ENCODE measurements at regions of chr12 and their contacts with region 1.

Region 1: DNA sequence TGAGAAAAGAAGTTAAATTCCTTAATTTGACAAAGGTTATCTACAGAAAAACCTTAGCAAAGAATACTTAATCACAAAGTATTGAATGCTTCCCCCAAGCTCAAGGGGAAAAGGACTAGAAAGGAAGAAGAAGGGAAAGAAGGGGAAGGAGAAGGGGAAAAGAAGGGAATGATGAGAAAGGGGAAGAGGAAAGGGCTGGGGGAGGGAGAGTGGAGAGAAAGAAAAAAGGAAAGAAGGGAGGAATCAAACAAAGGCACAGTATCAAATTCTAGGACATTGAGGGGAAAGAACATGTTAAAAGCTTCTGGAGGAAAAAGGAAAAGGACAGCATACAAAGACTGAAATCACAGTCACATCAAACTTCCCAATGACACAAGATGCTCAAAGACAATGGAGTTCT is 70.3 kb downstream of the BCL2L14 start:
- DNase-seq: no peak
- ATAC-seq: no peak
- H3K4me3 ChIP-seq: no peak overlapping the region
- H3K27ac ChIP-seq: no peak overlapping the region
- H3K4me1 ChIP-seq: no peaks in the 10 kb centered on the region
- H3K27me3 ChIP-seq: no peaks in the 10 kb centered on the region
- CTCF ChIP-seq: no peak
- POLR2A ChIP-seq: no peak
- RAD21 ChIP-seq: no peak

Region 2: DNA sequence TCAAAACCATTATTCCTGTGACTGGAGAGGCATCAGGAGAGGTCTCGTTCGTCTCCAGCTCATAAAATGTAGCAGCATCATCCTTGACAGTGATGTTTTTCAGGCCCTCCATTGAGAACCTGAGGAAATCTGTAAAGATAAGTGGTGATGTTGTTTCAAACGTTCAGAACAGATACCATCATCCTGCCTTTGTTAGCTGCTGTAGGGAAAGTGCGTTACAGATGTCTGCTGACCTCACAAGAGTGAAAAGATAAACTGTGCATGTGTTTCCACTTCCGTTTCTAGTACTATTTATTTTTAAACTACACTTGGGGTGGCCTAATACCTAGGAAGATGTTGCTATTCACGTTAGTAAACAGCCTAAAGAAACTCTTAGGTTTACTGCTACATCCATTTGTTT is 41.9 kb before region 1 on chr12:
- CTCF ChIA-PET with region 1: no interaction called
- POLR2A ChIA-PET with region 1: no interaction called
- dilution Hi-C with region 1: no loop called
- in situ Hi-C with region 1: no loop called
- intact Hi-C with region 1: no loop called
- DNase-seq: no peak
- ATAC-seq: no peak
- H3K4me3 ChIP-seq: no peak overlapping the region
- H3K27ac ChIP-seq: no peak overlapping the region
- H3K4me1 ChIP-seq: peaks cover 8% of the 10 kb centered on the region; the same call in 1 of the 2 replicates
- H3K27me3 ChIP-seq: no peaks in the 10 kb centered on the region
- CTCF ChIP-seq: no peak
- POLR2A ChIP-seq: no peak
- RAD21 ChIP-seq: no peak

Region 3: DNA sequence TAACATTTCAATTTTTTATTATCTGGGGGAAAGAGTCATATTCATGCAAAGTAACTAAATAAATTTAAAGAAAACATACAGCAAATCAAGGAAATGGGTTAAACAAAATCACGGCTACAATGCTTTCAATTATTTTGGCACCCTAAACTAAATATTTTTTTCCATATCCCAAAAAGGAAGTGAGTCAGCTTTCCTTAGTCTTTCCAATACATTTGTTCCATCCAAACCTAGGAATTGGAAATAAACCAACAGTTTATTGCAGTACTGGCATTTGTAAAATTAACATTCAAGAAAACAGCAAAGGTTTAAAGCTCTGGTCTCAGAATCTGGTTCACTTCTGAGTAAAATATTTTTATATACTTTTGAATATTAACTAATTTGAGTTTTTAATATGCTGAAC is 19.0 kb after region 1 on chr12:
- CTCF ChIA-PET with region 1: no interaction called
- POLR2A ChIA-PET with region 1: no interaction called
- dilution Hi-C with region 1: no loop called
- in situ Hi-C with region 1: no loop called
- intact Hi-C with region 1: loop called (anchors 2 kb)
- DNase-seq: peak; percentile 53
- ATAC-seq: 0 out of 2 replicates have a peak, but pooled peaks have one; percentile 14
- H3K4me3 ChIP-seq: no peak overlapping the region
- H3K27ac ChIP-seq: no peak overlapping the region
- H3K4me1 ChIP-seq: peaks cover 4% of the 10 kb centered on the region; the same call in 1 of the 2 replicates
- H3K27me3 ChIP-seq: no peaks in the 10 kb centered on the region
- CTCF ChIP-seq: no peak
- POLR2A ChIP-seq: no peak
- RAD21 ChIP-seq: no peak